Sciatic nerve (tissue), 2 donors: ENCODE measurements at regions of chr6 and their contacts with region 1.

Region 1: GRCh38 chr6:36979347-36979742 is 6.7 kb downstream of the MTCH1 start:
- DNase-seq: peak; percentile 76
- ATAC-seq: peak; percentile 86

Region 2: DNA sequence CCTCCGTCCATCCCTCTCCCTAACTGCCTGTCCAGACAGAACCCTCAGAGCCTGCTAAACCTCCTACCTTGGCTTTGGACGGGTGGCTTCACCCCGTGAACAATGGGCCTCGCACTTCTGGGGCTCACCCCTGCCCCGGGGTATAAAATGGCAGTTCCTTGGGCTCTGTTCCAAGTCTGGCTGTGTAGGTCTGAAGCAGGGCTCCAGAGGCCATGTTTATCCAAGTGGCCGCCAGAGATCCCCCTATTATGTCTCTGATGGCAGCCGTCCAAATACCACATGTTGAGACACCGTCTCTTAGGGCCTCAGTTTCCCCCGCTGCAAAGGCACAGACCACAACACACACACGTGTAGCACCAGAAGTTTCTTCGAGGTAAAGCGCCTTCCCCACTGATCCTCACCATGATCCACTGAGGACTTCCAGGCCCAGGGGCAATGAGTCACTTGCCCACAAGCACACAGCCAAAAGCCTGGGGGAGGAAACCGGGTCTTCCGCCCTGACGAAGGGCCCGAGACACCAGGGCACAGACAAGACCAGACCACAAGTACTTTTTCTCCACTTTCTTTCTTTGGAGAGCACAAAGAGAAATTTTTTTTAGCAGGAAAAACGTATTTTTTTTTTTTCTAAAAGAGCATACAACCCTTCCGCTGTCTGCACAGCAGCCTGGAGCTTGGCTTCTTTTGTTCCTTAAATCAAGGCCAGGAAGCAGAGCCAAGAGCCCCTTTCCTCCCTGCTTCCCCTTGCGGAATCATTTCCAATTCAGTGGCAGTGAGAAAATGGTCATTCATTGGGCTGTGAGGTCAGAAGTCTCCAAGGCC is 151.9 kb before region 1 on chr6:
- intact Hi-C with region 1: no loop called
- DNase-seq: no peak
- ATAC-seq: peak; percentile 51

Region 3: DNA sequence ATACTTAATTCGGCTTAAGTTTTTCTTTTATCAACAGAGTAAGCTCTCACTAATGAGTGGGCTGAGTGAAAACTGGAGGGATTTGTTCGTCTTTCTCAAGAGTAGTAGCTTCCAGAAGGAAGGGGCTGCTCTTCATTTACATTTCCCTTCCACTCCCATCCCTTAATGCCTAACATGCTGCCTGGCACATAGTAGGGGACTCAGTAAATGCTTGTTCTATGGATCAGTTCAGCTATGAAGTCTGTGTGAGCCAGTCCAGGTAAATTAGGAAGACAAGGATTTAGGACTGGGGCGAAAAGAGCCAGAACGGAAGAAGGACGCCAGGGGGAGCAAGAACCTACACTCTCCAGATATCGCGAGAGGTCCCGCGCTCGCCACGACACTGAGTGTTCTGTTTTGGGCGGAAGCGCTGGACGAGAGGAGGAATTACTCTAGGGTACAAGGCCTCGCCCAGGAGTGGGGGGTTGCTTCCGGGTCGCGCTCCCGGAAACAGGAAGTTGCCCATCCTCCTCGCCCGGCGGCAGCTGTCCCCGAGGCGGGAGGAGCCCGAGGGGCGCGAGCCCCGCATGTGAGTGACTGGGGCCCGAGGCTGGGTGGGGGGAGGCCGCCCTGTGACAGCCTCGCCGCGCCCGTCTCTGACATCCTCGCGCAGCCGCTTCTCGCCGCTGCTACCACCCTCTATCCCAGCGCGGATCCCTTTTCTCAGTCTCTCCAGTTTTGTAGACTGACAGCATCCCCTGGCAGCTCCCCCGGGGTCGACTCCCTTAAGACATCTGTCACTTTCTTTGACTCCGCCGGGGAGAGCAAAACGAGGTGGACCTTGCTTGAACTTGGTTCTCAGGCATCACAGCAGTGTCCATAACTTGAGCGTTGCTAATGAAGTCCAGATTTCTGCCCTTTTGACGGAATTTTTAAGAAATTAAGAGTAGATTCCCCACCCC is 93.6 kb before region 1 on chr6 and contains the start of gene C6orf89:
- intact Hi-C with region 1: loop called (anchors 10 kb)
- DNase-seq: peak; percentile 98
- ATAC-seq: peak; percentile 100
- total RNA-seq, gene C6orf89: 56.6 TPM

Region 4: DNA sequence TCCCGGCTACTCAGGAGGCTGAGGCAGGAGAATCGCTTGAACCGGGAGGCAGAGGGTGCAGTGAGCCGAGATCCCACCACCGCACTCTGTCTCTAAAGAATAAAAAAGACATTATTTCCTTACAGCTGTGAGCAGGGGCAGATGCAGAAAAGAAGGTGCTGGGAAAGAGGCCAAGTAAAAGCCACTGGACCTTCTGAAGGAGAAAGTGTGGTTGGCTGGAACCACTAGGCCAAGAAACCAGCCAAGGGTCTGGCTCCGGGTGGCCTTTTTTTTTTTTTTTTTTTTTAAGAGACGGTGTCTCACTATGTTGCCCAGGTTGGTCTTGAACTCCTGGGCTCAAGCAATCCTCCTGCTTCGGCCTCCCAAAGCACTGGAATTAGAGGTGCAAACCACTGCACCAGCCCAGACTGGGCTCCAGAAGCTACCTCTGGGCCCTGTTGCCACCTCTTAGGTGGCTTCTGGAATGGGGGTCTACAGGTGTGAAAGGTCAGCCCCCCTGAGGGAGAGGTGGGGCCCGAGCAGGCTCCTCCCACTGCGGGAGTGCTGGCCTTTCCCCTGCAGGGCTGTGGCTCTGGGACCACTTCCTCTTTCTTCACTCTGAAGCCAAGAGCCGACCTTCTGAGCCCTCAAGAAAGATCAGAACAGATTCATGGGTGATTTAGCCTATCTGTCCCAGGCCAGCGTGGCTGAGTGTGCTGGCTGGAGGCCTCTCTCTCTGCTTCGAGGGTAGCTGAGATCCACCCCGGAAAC is 25.9 kb after region 1 on chr6 and contains the start of gene FGD2:
- intact Hi-C with region 1: no loop called
- DNase-seq: no peak
- ATAC-seq: peak; percentile 18
- total RNA-seq, gene FGD2: 19.7 TPM

Region 5: GRCh38 chr6:37222125-37222967 is 243.0 kb after region 1 on chr6:
- intact Hi-C with region 1: no loop called
- DNase-seq: peak; percentile 75
- ATAC-seq: peak; percentile 93